CD8-positive, alpha-beta memory T cell (primary cell): ENCODE measurements at regions of chr17 and their contacts with region 1.

Region 1: DNA sequence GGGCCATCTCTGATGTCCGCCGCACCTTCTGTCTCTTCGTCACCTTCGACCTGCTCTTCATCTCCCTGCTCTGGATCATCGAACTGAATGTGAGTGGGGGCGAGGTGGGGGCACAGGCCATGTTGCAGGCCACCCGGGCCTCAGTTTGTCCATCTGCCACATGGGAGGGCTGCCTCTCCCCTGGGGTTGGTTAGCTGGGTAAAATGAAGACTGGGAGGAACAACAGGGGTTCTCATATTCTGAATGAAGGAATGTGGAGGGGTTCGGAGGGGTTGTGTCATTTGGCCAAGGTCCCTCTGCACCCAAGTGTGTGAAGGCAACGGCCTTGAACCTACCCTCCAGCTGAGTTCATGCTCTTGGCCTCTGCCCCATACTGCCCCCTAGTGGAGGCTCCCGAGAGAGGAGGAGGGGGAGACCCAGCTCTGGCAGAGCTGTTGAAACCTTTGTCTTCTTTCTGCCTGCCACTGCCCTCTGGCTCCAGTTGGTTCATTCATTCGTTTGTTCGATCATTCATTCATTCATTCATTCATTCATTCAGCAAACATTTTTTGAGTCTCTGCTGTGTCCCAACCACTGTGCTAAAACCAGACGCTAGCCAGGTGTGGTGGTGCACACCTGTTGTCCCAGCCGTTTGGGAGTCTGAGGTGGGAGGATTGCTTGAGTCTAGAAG is 11.4 kb upstream of the TCAP start:
- DNase-seq: peak; percentile 61 to 84 (median 71)
- H3K4me3 ChIP-seq: no peak overlapping the region
- H3K4me3 Mint-ChIP-seq: no peak overlapping the region
- H3K27ac ChIP-seq: no peak overlapping the region
- H3K27ac Mint-ChIP-seq: peak overlapping the region in 5 of 8 donors; percentile 6 to 79 (median 61)
- H3K4me1 ChIP-seq: peaks cover 29% of the 10 kb centered on the region
- H3K4me1 Mint-ChIP-seq: peaks cover 37 to 58% (median 47%) of the 10 kb centered on the region in 3 donors
- H3K27me3 ChIP-seq: no peaks in the 10 kb centered on the region
- H3K27me3 Mint-ChIP-seq: peaks cover 0 to 1% of the 10 kb centered on the region in 2 donors

Region 2: DNA sequence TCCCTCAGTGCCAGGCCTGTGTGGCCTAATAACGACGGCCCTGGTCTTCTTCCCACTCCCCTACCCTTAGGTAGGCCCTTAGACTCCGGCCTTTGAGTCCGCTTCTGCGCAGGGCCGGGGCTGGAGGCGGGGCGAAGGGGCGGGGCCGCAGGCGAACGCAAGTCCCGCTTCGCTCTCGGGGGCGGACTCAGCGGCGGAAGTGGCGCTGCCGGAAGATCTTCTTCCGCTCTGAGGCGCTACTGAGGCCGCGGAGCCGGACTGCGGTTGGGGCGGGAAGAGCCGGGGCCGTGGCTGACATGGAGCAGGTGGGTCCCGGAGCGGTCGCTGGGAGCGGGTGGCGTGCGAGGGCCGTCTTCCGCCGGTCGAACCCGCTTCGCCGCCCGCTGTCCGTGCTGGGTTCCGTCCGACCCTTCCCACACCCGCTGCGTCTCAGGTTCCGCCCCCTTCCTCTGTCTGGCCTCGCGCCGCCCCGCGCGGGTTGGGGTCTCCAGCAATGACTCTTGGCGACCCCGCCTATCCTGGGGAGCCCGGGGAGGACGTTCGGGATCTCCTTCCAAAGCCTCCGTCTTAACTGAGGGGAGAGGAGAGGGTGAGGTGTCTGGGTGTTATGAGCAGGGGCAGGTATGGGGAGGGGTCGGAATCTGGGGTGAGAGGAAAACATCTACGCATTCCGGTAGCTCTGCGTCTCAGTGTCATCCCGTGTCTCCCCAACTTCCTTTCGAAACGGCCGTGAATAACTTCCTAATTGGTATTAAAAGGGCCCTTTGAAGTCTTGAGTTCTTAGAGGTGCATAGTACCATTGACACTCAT is 16.7 kb before region 1 on chr17 and contains the start of gene STARD3:
- CTCF ChIA-PET with region 1: interaction called, 34 read pairs
- POLR2A ChIA-PET with region 1: no interaction called
- DNase-seq: peak; percentile 84 to 93 (median 89)
- H3K4me3 ChIP-seq: peak within 1 kb of the TSS; percentile 98
- H3K4me3 Mint-ChIP-seq: peak within 1 kb of the TSS; percentile 90 to 96 (median 93)
- H3K27ac ChIP-seq: peak within 1 kb of the TSS; percentile 90
- H3K27ac Mint-ChIP-seq: peak within 1 kb of the TSS; percentile 82 to 98 (median 96)
- H3K4me1 ChIP-seq: peaks cover 55% of the 10 kb centered on the region
- H3K4me1 Mint-ChIP-seq: peaks cover 55 to 70% (median 61%) of the 10 kb centered on the region in 3 donors
- H3K27me3 ChIP-seq: no peaks in the 10 kb centered on the region
- H3K27me3 Mint-ChIP-seq: peaks cover 0 to 5% of the 10 kb centered on the region in 2 donors
- total RNA-seq, gene STARD3: 71.4 to 74.1 TPM

Region 3: GRCh38 chr17:39668199-39668966 is 14.6 kb after region 1 on chr17 and contains the start of gene PNMT:
- CTCF ChIA-PET with region 1: interaction called, 60 read pairs
- POLR2A ChIA-PET with region 1: no interaction called
- DNase-seq: peak; percentile 49 to 76 (median 52)
- H3K4me3 ChIP-seq: peak within 1 kb of the TSS; percentile 37
- H3K4me3 Mint-ChIP-seq: peak within 1 kb of the TSS; percentile 7 to 88 (median 67)
- H3K27ac ChIP-seq: peak within 1 kb of the TSS; percentile 24
- H3K27ac Mint-ChIP-seq: peak within 1 kb of the TSS in 3 of 8 donors; percentile 46 to 88 (median 62)
- H3K4me1 ChIP-seq: peaks cover 6% of the 10 kb centered on the region
- H3K4me1 Mint-ChIP-seq: peaks cover 6 to 21% (median 6%) of the 10 kb centered on the region in 3 donors
- H3K27me3 ChIP-seq: no peaks in the 10 kb centered on the region
- H3K27me3 Mint-ChIP-seq: peaks cover 3 to 25% of the 10 kb centered on the region in 2 donors
- total RNA-seq, gene PNMT: not detected

Region 4: GRCh38 chr17:39677542-39678339 is 23.9 kb after region 1 on chr17:
- CTCF ChIA-PET with region 1: interaction called, 60 read pairs
- POLR2A ChIA-PET with region 1: no interaction called
- DNase-seq: no peak
- H3K4me3 ChIP-seq: no peak overlapping the region
- H3K4me3 Mint-ChIP-seq: peak overlapping the region in 4 of 7 donors; percentile 8 to 36 (median 30)
- H3K27ac ChIP-seq: no peak overlapping the region
- H3K27ac Mint-ChIP-seq: peak overlapping the region; percentile 70 to 98 (median 95)
- H3K4me1 ChIP-seq: peaks cover 67% of the 10 kb centered on the region
- H3K4me1 Mint-ChIP-seq: peaks cover 59 to 69% (median 67%) of the 10 kb centered on the region in 3 donors
- H3K27me3 ChIP-seq: no peaks in the 10 kb centered on the region
- H3K27me3 Mint-ChIP-seq: no peaks in the 10 kb centered on the region

Region 5: DNA sequence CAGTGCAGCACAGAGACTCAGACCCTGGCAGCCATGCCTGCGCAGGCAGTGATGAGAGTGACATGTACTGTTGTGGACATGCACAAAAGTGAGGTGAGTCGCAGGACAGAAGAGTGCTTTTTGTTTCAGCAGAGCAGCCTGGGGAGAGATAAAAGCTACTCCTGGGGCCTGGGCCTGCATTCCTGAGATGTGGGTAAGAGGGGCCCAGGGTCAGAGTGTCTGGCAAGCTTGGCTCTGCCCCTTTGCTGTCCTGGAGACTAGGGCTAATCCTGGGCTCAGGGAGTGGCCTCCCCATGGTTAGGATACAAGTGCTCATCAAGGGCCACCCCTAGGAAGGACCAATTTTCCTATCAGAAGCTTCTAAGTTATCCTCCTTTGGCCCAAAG is 41.3 kb after region 1 on chr17:
- CTCF ChIA-PET with region 1: no interaction called
- POLR2A ChIA-PET with region 1: no interaction called
- DNase-seq: no peak
- H3K4me3 ChIP-seq: no peak overlapping the region
- H3K4me3 Mint-ChIP-seq: no peak overlapping the region
- H3K27ac ChIP-seq: no peak overlapping the region
- H3K27ac Mint-ChIP-seq: no peak overlapping the region
- H3K4me1 ChIP-seq: no peaks in the 10 kb centered on the region
- H3K4me1 Mint-ChIP-seq: peaks cover 4 to 10% (median 6%) of the 10 kb centered on the region in 3 donors
- H3K27me3 ChIP-seq: no peaks in the 10 kb centered on the region
- H3K27me3 Mint-ChIP-seq: peaks cover 9 to 23% of the 10 kb centered on the region in 2 donors